ENCODE measurements at regions of chr1 and their contacts with region 1.

Region 1: DNA sequence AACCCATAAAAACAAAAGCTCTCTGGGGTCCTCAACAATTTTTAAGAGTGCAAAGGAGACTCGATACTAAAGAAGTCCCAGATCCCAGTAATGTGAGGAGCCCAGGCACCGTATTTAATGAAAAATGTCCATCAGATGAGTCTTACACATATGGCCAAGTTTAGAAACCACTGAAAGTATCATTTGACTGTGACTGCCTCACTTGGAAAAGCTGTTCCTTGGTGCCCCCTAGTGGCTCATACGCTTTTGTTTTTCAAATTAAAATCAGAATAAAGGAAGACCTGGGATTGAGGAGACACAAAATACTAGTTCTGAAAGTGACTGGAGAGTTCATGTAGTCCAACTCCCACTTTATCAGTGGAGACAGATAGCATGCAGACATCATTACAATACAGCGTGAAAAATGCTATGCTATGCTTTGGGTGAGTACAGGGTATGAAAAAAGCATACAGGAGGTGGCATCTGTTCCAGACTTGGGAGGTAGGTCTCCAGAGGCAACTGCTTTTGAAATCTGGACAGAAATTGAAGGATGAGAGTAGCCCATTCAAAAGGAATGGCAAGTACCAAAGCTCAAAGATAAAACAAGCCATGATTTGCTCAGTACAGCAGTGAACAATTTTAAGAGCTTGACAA is 33.8 kb downstream of the GDAP2 start:
- DNase-seq: peak; percentile 34
- H3K4me3 ChIP-seq: no peak overlapping the region
- H3K27ac ChIP-seq: peak overlapping the region in 1 of 2 experiments; percentile 29; a peak in 1 of 4 replicates
- H3K4me1 ChIP-seq: no peaks in the 10 kb centered on the region; a peak in 2 of 4 replicates
- H3K27me3 ChIP-seq: no peaks in the 10 kb centered on the region
- CTCF ChIP-seq: peak; percentile 85
- EP300 ChIP-seq: no peak
- RAD21 ChIP-seq: peak; percentile 89

Region 2: GRCh38 chr1:117710710-117711109 is 184.9 kb before region 1 on chr1:
- CTCF ChIA-PET with region 1: interaction called, 11 read pairs
- POLR2A ChIA-PET with region 1: no interaction called
- DNase-seq: peak; percentile 27
- H3K4me3 ChIP-seq: no peak overlapping the region
- H3K27ac ChIP-seq: no peak overlapping the region
- H3K4me1 ChIP-seq: no peaks in the 10 kb centered on the region
- H3K27me3 ChIP-seq: no peaks in the 10 kb centered on the region
- CTCF ChIP-seq: peak; percentile 51
- EP300 ChIP-seq: no peak
- RAD21 ChIP-seq: peak; percentile 33; the same call in 1 of the 2 replicates

Region 3: DNA sequence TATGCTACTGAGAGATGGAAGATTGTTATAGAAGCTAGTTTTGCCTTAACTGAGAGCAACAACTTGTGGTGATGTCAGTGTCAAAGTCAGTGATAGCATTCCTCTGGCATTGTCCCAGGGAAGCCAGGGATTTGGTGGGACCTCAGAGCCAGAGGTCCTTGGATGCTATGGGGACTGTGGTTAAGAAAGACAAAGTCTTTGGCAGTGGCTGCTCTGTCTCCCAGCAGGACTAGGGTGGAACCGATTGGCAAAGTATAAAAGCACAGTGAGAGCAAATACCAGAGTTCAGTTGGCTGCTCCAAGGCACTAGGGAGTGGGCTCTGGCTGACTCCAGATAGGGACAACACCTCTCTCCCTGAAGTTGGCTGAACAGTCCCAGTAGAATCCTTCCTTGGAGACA is 71.0 kb before region 1 on chr1:
- CTCF ChIA-PET with region 1: interaction called, 10 read pairs
- POLR2A ChIA-PET with region 1: no interaction called
- DNase-seq: no peak
- H3K4me3 ChIP-seq: no peak overlapping the region
- H3K27ac ChIP-seq: peak overlapping the region in 1 of 2 experiments; percentile 98; a peak in 1 of 4 replicates
- H3K4me1 ChIP-seq: peaks cover 45 to 53% of the 10 kb centered on the region in 2 experiments
- H3K27me3 ChIP-seq: no peaks in the 10 kb centered on the region
- CTCF ChIP-seq: no peak
- EP300 ChIP-seq: no peak
- RAD21 ChIP-seq: no peak

Region 4: DNA sequence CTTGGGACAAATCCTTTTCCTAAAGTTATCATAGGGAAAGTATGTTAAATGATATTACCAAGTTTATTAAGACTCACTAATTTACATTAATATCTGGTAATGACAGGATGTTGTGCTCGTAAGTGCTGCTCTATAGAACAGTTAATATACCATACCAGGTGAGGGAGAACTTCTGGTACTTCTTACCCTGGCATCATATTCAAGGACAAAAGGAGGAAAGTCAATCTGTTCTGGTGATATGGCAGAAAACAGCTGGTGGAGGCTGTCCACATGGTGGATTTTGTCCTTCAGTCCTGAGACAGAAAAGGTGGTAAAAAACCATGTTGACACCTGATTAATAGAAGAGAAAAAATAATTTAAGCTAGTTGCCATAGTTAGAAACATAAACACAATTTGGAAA is 17.8 kb before region 1 on chr1:
- CTCF ChIA-PET with region 1: interaction called, 37 read pairs
- POLR2A ChIA-PET with region 1: interaction called, 4 read pairs
- DNase-seq: no peak
- H3K4me3 ChIP-seq: no peak overlapping the region
- H3K27ac ChIP-seq: no peak overlapping the region
- H3K4me1 ChIP-seq: no peaks in the 10 kb centered on the region
- H3K27me3 ChIP-seq: no peaks in the 10 kb centered on the region
- CTCF ChIP-seq: no peak
- EP300 ChIP-seq: no peak
- RAD21 ChIP-seq: no peak

Region 5: GRCh38 chr1:117919376-117919775 is 23.8 kb after region 1 on chr1:
- CTCF ChIA-PET with region 1: interaction called, 10 read pairs
- POLR2A ChIA-PET with region 1: no interaction called
- DNase-seq: no peak
- H3K4me3 ChIP-seq: no peak overlapping the region
- H3K27ac ChIP-seq: no peak overlapping the region
- H3K4me1 ChIP-seq: no peaks in the 10 kb centered on the region
- H3K27me3 ChIP-seq: no peaks in the 10 kb centered on the region
- CTCF ChIP-seq: no peak
- EP300 ChIP-seq: no peak
- RAD21 ChIP-seq: no peak